Cardiac septum (tissue), 1 donor: ENCODE measurements at regions of chr2 and their contacts with region 1.

Region 1: DNA sequence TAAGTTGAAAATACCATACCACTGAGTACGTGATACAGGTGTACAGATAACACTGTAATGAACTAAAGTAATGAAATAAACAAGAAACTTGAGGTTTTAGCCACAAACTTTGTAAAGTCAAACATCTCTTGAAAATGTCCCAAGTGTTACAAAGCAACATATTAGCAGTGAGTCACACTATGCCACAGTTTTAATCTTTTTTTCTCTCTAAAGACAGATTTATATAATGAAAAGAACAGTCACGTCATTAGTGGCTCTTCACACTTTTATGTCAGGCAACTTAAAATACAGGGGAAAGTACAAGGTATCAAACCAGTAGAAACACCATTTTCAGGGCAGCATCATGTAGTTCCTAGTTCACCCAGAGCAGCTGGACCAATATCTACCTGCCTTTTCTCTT is 42.1 kb downstream of the RAPH1 start:
- DNase-seq: no peak

Region 2: DNA sequence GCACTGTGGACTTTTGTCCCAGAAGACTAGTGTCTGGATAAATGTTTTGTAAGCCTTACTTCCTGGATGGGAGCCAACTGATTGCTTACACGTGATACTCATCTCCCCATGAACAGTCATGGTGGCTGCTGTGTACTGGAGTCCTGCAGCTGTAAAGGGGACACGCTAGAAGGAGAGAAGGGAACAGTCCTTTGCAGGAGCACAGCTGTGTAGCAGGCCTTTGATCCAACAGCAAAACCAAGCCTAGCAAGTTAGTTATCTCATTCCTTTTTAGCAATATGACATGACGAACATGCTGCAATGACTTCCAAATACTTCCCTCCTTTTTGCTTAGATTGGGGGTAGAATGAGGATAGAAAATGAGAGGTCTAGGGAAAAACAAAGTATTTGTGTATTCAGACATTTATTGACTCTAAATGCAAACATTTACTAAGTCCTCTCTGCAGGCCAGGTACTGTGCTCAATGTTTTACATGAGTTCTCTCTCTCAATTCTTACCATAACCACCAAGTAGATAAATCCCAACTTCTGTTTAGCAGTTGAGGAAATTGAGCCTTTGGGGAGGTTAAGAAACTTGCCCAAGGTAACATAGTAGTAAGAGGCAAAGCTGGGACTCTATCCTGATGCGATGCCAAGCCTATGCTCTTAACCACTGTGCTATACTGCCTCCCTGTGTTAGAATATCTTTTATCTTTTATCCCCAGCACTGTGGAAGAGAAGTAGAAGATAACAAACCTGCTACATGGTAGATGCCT is 158.1 kb after region 1 on chr2:
- intact Hi-C with region 1: loop called (anchors 5 kb)
- DNase-seq: no peak